GM12878 (cell line): ENCODE measurements at regions of chr15 and their contacts with region 1.

Region 1: GRCh38 chr15:52528991-52529926 is 579 bp upstream of the MYO5A start:
- DNase-seq: no peak
- ATAC-seq: peak; percentile 83
- H3K4me3 ChIP-seq: peak overlapping the region; percentile 85
- H3K27ac ChIP-seq: peak overlapping the region; percentile 39; the same call in 1 of the 2 replicates
- H3K4me1 ChIP-seq: peaks cover 3% of the 10 kb centered on the region
- H3K27me3 ChIP-seq: no peaks in the 10 kb centered on the region
- CTCF ChIP-seq: peak in 1 of 3 experiments; percentile 35; a peak in 2 of 6 replicates
- EP300 ChIP-seq: no peak
- POLR2A ChIP-seq: 0 out of 2 replicates have a peak, but pooled peaks have one; percentile 18
- RAD21 ChIP-seq: peak; percentile 46

Region 2: DNA sequence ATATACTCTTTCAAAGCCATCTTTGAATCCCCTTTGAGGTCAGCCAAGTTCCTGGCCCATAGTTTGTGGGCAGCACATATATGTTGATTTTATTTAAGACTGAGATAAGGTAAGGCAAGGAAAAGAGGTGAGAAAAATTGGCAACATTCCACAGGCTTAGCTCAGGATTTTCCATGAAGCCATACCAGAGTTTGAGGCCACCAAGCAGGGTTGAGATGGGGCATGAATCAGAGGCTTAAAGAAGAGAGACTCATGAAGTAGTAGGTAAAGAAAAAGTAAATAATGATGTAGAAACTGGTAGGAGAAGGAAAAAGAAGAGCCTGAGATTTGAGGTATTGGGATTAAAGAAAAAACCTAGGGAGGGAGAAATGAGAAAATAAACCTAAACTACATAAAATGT is 89.8 kb before region 1 on chr15:
- CTCF ChIA-PET with region 1: no interaction called
- POLR2A ChIA-PET with region 1: no interaction called
- RAD21 ChIA-PET with region 1: no interaction called
- SMC1A ChIA-PET with region 1: no interaction called
- in situ Hi-C with region 1: no loop called
- intact Hi-C with region 1: no loop called
- DNase-seq: no peak
- ATAC-seq: no peak
- H3K4me3 ChIP-seq: no peak overlapping the region
- H3K27ac ChIP-seq: no peak overlapping the region
- H3K4me1 ChIP-seq: peaks cover 9% of the 10 kb centered on the region
- H3K27me3 ChIP-seq: no peaks in the 10 kb centered on the region
- CTCF ChIP-seq: no peak
- EP300 ChIP-seq: no peak
- POLR2A ChIP-seq: no peak
- RAD21 ChIP-seq: no peak

Region 3: GRCh38 chr15:52558196-52558595 is 28.9 kb after region 1 on chr15:
- CTCF ChIA-PET with region 1: interaction called, 6 read pairs
- POLR2A ChIA-PET with region 1: interaction called, 4 read pairs
- RAD21 ChIA-PET with region 1: interaction called, 14 read pairs
- SMC1A ChIA-PET with region 1: interaction called, 5 read pairs
- in situ Hi-C with region 1: no loop called
- intact Hi-C with region 1: no loop called
- DNase-seq: peak; percentile 84
- ATAC-seq: peak; percentile 83
- H3K4me3 ChIP-seq: peak overlapping the region; percentile 50; the same call in 1 of the 2 replicates
- H3K27ac ChIP-seq: peak overlapping the region; percentile 85
- H3K4me1 ChIP-seq: peaks cover 33% of the 10 kb centered on the region
- H3K27me3 ChIP-seq: no peaks in the 10 kb centered on the region
- CTCF ChIP-seq: no peak
- EP300 ChIP-seq: no peak
- POLR2A ChIP-seq: no peak
- RAD21 ChIP-seq: no peak